IMR-90 (cell line): ENCODE measurements at regions of chr17 and their contacts with region 1.

Region 1: DNA sequence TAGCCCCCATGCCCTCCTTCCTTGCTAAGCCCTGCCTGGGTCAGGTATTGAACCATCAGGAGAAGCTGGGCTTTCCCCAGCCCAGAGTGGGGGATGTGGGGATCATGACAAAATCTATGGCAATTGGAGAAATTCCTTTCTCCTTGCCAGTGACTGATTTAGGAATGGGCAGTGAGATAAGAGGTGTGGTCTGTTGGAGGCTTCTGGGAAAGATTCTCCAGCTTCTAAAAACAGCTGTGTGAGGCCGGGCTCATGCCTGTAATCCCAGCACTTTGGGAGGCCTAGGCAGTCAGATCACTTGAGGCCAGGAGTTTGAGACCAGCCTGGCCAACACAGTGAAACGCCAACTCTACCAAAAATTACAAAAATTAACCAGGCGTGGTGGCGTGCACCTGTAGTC is 69.1 kb downstream of the SRCIN1 start:
- DNase-seq: no peak
- ATAC-seq: no peak
- H3K4me3 ChIP-seq: no peak overlapping the region
- H3K27ac ChIP-seq: no peak overlapping the region
- H3K4me1 ChIP-seq: no peaks in the 10 kb centered on the region
- H3K27me3 ChIP-seq: peaks cover 35% of the 10 kb centered on the region
- CTCF ChIP-seq: no peak
- POLR2A ChIP-seq: no peak
- RAD21 ChIP-seq: no peak

Region 2: DNA sequence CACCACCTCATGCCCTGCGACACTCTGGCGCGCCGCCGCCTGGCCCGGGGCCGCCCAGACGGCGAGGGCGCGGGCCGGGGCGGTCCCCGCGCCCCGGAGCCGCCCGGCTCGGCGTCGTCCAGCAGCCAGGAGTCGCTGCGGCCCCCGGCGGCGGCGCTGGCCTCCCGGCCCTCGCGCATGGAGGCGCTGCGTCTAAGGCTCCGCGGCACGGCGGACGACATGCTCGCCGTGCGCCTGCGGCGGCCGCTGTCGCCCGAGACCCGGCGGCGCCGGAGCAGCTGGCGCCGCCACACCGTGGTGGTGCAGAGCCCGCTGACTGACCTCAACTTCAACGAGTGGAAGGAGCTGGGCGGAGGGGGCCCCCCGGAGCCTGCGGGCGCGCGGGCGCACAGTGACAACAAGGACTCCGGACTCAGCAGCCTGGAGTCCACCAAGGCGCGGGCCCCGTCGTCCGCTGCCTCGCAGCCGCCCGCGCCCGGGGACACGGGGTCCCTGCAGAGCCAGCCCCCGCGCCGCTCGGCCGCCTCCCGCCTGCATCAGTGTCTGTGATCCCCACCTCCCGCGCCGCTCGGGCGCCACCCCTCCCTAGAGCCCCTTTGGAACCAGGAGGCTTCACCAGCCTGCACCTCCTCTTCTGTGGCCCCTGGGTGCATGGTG is 26.1 kb before region 1 on chr17:
- CTCF ChIA-PET with region 1: interaction called, 8 read pairs
- POLR2A ChIA-PET with region 1: no interaction called
- dilution Hi-C with region 1: no loop called
- in situ Hi-C with region 1: no loop called
- intact Hi-C with region 1: loop called (anchors 1 kb)
- DNase-seq: no peak
- ATAC-seq: peak; percentile 13
- H3K4me3 ChIP-seq: no peak overlapping the region
- H3K27ac ChIP-seq: no peak overlapping the region
- H3K4me1 ChIP-seq: peaks cover 12% of the 10 kb centered on the region
- H3K27me3 ChIP-seq: no peaks in the 10 kb centered on the region
- CTCF ChIP-seq: no peak; the same call in 1 of the 2 replicates
- POLR2A ChIP-seq: no peak
- RAD21 ChIP-seq: no peak